ENCODE measurements at regions of chr20 and their contacts with region 1.

Region 1: DNA sequence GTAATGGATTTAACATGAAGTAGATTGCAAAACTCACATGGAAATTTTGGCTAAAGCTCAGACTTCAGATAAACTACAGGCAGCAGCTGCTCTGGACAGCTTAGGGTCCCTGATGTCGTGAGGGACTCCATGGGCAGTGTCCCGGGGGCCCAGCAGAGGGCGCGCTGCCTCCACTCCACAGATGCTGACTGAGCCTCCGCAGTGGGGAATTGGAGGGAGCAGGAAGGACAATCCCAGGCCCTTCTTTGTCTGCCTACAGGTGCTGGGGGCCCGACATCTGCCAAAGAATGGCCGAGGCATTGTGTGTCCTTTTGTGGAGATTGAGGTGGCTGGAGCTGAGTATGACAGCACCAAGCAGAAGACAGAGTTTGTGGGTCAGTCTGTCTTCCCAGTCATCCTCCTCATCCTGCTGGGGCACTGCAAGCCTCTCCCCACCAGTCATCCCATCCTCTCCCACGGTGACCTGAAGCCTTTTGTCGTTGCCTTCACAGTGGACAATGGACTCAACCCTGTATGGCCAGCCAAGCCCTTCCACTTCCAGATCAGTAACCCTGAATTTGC is 35.9 kb downstream of the PLCG1 start:
- DNase-seq: peak; percentile 36 to 62 (median 58)
- H3K4me3 ChIP-seq: no peak overlapping the region
- H3K27ac ChIP-seq: no peak overlapping the region
- H3K4me1 ChIP-seq: peaks cover 0 to 2% (median 1%) of the 10 kb centered on the region in 4 experiments
- H3K27me3 ChIP-seq: peaks cover 0 to 73% (median 29%) of the 10 kb centered on the region in 5 experiments

Region 2: DNA sequence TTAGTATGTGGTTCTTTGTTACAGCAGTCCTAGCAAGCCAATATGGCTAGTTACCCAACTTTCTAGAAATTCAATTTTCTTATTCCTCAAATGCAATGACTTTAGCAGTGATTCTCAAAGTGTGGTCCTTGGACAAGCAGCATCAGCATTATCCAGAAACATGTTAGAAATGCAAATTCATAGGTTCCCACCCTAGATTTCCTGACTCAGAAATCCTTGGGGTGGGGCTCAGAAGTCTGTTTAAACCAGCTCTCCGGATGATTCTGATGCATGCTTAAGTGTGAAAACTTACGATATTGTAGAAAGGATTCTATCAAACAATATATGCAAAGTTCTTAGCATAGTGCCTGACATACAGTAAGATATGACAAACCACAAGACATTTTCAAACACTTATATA is 1453.9 kb before region 1 on chr20:
- CTCF ChIA-PET with region 1: no interaction called
- POLR2A ChIA-PET with region 1: no interaction called
- DNase-seq: no peak
- H3K4me3 ChIP-seq: no peak overlapping the region
- H3K27ac ChIP-seq: no peak overlapping the region
- H3K4me1 ChIP-seq: no peaks in the 10 kb centered on the region
- H3K27me3 ChIP-seq: no peaks in the 10 kb centered on the region

Region 3: DNA sequence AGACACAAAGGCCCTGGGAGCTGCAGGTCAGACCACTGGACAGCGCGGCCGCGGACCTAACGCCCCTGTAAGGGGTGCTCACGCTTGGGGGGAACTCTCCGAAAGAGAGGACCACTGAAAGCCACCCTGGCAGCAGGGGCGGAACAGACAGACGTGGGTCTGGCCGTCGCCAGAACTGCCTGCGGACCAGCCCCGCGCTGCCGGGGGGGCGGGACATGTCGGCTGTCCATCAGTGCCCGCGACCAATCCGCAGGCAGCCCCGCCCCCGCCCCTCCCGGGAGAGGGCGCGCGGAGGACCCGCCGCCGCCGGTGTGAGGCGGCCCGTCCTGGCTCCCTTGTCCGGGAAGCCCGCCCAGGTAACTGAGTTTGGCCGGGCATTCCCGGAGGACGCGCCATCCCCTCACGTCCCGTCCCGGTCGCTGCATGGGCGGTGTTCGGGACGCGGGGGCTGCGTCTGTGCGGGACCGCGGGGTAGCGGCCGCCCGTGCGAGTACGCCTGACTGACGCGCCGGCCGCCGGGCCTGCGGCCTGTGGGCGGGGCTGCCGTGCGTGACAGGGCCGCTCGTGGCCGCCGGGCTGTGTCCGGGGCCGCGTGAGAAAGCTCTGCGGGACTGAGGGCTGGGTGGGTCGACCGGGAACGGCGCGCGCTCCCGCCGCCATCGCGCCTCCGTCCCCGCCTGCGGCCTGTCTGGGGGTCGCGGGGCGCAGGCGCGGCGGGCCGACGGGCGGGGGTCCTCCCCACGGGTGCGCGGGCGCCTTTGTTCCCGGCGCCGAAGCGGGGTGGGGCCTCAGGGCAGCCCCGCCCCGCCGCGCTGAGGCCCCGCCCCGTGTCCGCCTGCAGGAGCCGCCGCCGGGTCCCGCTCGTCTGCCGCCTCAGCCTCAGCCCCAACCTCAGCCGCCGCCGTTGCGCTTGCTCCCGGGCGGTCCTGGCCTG is 36.3 kb before region 1 on chr20 and contains the start of gene PLCG1:
- CTCF ChIA-PET with region 1: interaction called, 14 read pairs
- POLR2A ChIA-PET with region 1: interaction called, 6 read pairs
- DNase-seq: peak; percentile 62 to 72 (median 67)
- H3K4me3 ChIP-seq: peak within 1 kb of the TSS; percentile 62 to 85 (median 75)
- H3K27ac ChIP-seq: peak within 1 kb of the TSS in 1 of 2 experiments; percentile 29
- H3K4me1 ChIP-seq: peaks cover 9 to 33% (median 31%) of the 10 kb centered on the region in 4 experiments
- H3K27me3 ChIP-seq: peaks cover 0 to 33% (median 11%) of the 10 kb centered on the region in 5 experiments

Region 4: DNA sequence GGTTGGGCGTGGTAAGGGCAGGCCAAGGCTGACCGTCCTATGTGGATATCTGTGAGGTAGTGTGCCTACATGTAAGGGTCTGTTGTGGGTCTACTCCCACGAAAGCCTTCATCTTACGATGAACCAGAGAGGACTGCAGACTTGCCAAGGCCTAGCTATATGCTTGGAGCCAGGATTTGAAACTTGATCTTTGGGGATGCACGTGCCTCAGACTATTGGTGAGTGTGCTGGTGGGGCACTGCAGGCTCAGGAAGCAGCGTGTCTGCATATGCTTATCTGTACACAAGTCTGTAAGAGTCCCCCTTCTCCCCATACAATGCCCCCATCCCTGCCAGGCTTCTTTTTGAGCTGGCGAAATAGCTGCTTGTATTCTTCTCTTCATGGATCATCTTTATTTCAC is 18.0 kb before region 1 on chr20:
- CTCF ChIA-PET with region 1: interaction called, 22 read pairs
- POLR2A ChIA-PET with region 1: no interaction called
- DNase-seq: no peak
- H3K4me3 ChIP-seq: no peak overlapping the region
- H3K27ac ChIP-seq: no peak overlapping the region
- H3K4me1 ChIP-seq: peaks cover 0 to 24% (median 15%) of the 10 kb centered on the region in 4 experiments
- H3K27me3 ChIP-seq: peaks cover 0 to 75% (median 16%) of the 10 kb centered on the region in 5 experiments

Region 5: DNA sequence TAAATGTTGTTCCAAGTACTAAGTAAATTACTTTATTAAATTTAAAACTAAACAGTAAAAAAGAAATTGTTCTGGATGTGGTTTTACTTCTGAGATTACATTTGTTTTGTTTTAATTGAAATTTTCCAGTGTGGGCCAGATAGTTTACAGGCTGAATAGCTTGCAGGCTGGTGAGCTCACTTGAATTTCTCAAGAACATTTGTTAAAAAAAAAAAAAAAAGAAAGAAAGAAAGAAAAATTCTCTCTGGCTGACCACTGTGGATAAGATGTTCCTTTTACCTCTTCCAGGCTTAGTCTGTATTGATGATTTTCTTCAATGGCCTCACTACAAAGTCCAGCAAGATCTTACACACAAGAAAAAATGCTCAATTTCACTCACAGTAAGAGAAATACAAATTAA is 49.5 kb after region 1 on chr20:
- CTCF ChIA-PET with region 1: interaction called, 12 read pairs
- POLR2A ChIA-PET with region 1: no interaction called
- DNase-seq: no peak
- H3K4me3 ChIP-seq: no peak overlapping the region
- H3K27ac ChIP-seq: no peak overlapping the region
- H3K4me1 ChIP-seq: peaks cover 0 to 13% (median 6%) of the 10 kb centered on the region in 4 experiments
- H3K27me3 ChIP-seq: no peaks in the 10 kb centered on the region

Region 6: DNA sequence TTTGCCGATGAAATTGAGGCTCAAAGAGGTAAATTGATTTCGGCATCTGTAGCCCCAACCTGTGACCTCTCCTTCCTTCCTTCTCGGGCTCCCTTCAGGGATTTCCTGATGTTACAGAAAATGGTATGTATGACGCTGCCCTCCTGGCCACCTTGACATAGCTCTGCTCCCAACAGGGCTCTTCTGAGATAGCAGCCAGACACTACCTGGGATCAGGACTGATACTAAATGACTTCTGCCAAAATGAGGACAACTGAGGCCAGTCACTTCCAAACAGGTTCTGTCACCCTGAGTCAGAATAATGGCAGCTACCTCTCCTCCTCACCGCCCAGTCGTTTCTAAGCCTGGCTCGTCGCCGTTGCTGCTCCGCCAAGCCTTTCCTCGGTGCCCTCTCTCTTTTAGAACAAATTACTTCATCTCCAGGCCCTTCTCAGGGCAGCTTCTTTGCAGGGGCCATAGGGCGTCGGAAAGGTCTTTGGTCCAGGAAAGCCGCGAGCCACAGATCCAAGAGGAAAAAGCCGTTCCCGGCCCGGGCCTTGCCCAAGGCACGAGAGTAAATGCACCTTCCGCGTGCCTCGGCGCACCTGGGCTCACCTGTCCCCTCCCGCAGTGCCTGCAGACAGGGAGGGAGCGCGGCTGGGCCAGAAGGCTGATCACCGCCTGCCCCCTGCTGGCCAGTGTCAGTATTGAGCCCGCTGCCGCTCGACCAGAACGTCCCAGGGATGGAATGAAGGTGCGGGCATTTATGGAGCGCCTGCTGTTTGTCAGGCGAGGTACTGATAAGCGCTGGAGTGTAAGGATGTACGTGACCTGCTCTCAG is 166.5 kb after region 1 on chr20:
- CTCF ChIA-PET with region 1: interaction called, 50 read pairs
- POLR2A ChIA-PET with region 1: no interaction called
- DNase-seq: peak; percentile 45 to 69 (median 67)
- H3K4me3 ChIP-seq: peak overlapping the region in 2 of 7 experiments; percentile 48 to 53
- H3K27ac ChIP-seq: no peak overlapping the region
- H3K4me1 ChIP-seq: peaks cover 0 to 12% (median 10%) of the 10 kb centered on the region in 4 experiments
- H3K27me3 ChIP-seq: peaks cover 0 to 45% (median 15%) of the 10 kb centered on the region in 5 experiments

Region 7: GRCh38 chr20:41353530-41353929 is 180.3 kb after region 1 on chr20:
- CTCF ChIA-PET with region 1: no interaction called
- POLR2A ChIA-PET with region 1: no interaction called
- DNase-seq: no peak
- H3K4me3 ChIP-seq: no peak overlapping the region
- H3K27ac ChIP-seq: no peak overlapping the region
- H3K4me1 ChIP-seq: no peaks in the 10 kb centered on the region
- H3K27me3 ChIP-seq: peaks cover 0 to 30% (median 17%) of the 10 kb centered on the region in 5 experiments

Measured in common myeloid progenitor, CD34-positive (primary cell).